B cell (primary cell): ENCODE measurements at regions of chr19 and their contacts with region 1.

Region 1: DNA sequence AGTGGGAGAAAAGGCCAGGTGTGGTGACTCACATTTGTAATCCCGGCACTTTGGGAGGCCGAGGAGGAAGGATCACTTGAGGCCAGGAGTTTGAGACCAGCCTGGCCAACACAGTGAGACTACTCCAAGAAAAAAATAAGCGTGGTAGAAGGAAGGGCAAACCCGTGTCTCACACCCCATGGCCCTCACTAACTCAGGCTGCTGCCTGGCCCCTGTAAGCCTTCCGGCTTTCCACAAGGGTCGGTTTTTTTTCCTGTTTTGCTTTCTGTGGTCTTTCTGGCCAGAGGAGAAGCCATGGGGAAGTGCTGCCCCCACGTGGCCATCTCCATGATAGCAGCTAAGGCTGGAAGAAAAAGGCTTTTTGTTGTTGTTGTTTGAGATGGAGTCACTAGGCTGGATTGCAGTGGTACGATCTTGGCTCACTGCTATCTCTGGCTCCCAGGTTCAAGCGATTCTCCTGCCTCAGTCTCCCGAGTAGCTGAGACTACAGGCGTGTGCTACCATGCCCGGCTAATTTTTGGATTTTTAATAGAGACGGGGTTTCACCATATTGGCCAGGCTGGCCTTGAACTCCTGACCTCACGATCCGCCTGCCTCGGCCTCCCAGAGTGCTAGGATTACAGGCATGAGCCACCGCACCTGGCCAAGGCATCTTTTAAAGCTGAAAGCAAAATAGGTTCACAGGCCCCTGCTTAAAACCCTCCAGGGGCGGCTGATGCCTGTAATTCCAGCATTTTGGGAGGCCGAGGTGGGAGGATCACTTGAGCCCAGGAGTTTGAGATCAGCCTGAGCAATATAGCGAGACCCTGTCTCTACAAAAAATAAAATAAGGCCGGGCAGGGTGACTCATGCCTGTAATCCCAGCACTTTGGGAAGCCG is 7.5 kb upstream of the ARHGEF18 start:
- DNase-seq: peak; percentile 90
- ATAC-seq: no peak
- H3K4me3 ChIP-seq: peak overlapping the region in 1 of 5 experiments; percentile 28
- H3K4me3 Mint-ChIP-seq: peak overlapping the region; percentile 70
- H3K27ac ChIP-seq: peak overlapping the region; percentile 68 to 75
- H3K27ac Mint-ChIP-seq: peak overlapping the region; percentile 95
- H3K4me1 ChIP-seq: peaks cover 93 to 99% of the 10 kb centered on the region in 2 donors
- H3K4me1 Mint-ChIP-seq: peaks cover 80% of the 10 kb centered on the region
- H3K27me3 ChIP-seq: no peaks in the 10 kb centered on the region
- H3K27me3 Mint-ChIP-seq: no peaks in the 10 kb centered on the region
- CTCF ChIP-seq: peak; percentile 90

Region 2: GRCh38 chr19:6767357-6768235 is 573.6 kb before region 1 on chr19 and contains the start of gene SH2D3A:
- CTCF ChIA-PET with region 1: no interaction called
- POLR2A ChIA-PET with region 1: no interaction called
- intact Hi-C with region 1: loop called (anchors 10 kb)
- DNase-seq: peak; percentile 98
- ATAC-seq: peak; percentile 69
- H3K4me3 ChIP-seq: peak within 1 kb of the TSS; percentile 36 to 81 (median 68)
- H3K4me3 Mint-ChIP-seq: peak within 1 kb of the TSS; percentile 93
- H3K27ac ChIP-seq: peak within 1 kb of the TSS; percentile 89 to 96
- H3K27ac Mint-ChIP-seq: peak within 1 kb of the TSS; percentile 95
- H3K4me1 ChIP-seq: peaks cover 28 to 46% of the 10 kb centered on the region in 2 donors
- H3K4me1 Mint-ChIP-seq: peaks cover 47% of the 10 kb centered on the region
- H3K27me3 ChIP-seq: no peaks in the 10 kb centered on the region
- H3K27me3 Mint-ChIP-seq: no peaks in the 10 kb centered on the region
- CTCF ChIP-seq: no peak
- total RNA-seq, gene SH2D3A: 33.5 and 36.1 TPM in 2 replicates

Region 3: GRCh38 chr19:7197760-7198696 is 143.2 kb before region 1 on chr19:
- CTCF ChIA-PET with region 1: interaction called, 4 read pairs
- POLR2A ChIA-PET with region 1: no interaction called
- intact Hi-C with region 1: loop called (anchors 1 kb)
- DNase-seq: peak; percentile 95
- ATAC-seq: peak; percentile 84
- H3K4me3 ChIP-seq: peak overlapping the region; percentile 54 to 77 (median 72)
- H3K4me3 Mint-ChIP-seq: peak overlapping the region; percentile 93
- H3K27ac ChIP-seq: peak overlapping the region; percentile 60 to 72
- H3K27ac Mint-ChIP-seq: peak overlapping the region; percentile 95
- H3K4me1 ChIP-seq: peaks cover 11 to 19% of the 10 kb centered on the region in 2 donors
- H3K4me1 Mint-ChIP-seq: peaks cover 21% of the 10 kb centered on the region
- H3K27me3 ChIP-seq: no peaks in the 10 kb centered on the region
- H3K27me3 Mint-ChIP-seq: peaks cover under 1% of the 10 kb centered on the region
- CTCF ChIP-seq: no peak

Region 4: GRCh38 chr19:7312816-7313215 is 28.4 kb before region 1 on chr19:
- CTCF ChIA-PET with region 1: no interaction called
- POLR2A ChIA-PET with region 1: no interaction called
- intact Hi-C with region 1: no loop called
- DNase-seq: no peak
- ATAC-seq: no peak
- H3K4me3 ChIP-seq: no peak overlapping the region
- H3K4me3 Mint-ChIP-seq: no peak overlapping the region
- H3K27ac ChIP-seq: no peak overlapping the region
- H3K27ac Mint-ChIP-seq: no peak overlapping the region
- H3K4me1 ChIP-seq: no peaks in the 10 kb centered on the region
- H3K4me1 Mint-ChIP-seq: no peaks in the 10 kb centered on the region
- H3K27me3 ChIP-seq: no peaks in the 10 kb centered on the region
- H3K27me3 Mint-ChIP-seq: no peaks in the 10 kb centered on the region
- CTCF ChIP-seq: no peak

Region 5: DNA sequence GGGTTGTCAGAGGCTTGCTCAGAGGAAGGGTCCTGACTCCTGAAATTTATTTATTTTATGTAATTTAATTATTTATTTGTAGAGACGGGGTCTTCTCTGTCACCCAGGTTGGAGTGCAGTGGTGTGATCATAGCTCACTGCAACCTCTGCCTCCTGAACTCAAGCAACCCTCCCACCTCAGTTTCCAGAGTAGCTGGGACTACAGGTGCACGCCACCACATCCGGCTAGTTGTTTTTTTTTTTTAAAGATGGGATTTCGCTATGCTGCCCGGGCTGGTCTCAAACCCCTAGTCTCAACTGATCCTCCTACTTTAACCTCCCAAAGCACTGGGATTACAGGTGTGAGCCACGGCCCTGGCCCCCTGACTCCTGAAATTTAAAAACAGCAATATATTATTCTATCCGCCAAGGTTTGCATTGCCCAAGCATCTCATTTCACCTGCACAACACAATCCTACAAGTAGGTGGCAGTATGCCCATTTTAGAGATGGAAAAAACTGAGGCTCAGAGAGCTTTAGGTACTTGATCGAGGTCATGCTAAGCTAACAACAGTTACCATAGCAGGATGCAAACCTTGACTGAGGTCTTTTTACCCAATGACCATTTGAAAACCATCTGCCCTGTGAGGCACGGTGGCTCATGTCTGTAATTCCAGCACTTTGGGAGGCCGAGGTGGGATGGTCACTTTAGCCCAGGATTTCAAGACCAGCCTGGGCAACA is 25.7 kb after region 1 on chr19:
- CTCF ChIA-PET with region 1: interaction called, 16 read pairs
- POLR2A ChIA-PET with region 1: no interaction called
- intact Hi-C with region 1: no loop called
- DNase-seq: peak; percentile 47
- ATAC-seq: peak; percentile 57
- H3K4me3 ChIP-seq: no peak overlapping the region
- H3K4me3 Mint-ChIP-seq: no peak overlapping the region
- H3K27ac ChIP-seq: no peak overlapping the region
- H3K27ac Mint-ChIP-seq: peak overlapping the region; percentile 76
- H3K4me1 ChIP-seq: peaks cover 0 to 6% of the 10 kb centered on the region in 2 donors
- H3K4me1 Mint-ChIP-seq: peaks cover 31% of the 10 kb centered on the region
- H3K27me3 ChIP-seq: no peaks in the 10 kb centered on the region
- H3K27me3 Mint-ChIP-seq: no peaks in the 10 kb centered on the region
- CTCF ChIP-seq: peak; percentile 54

Region 6: DNA sequence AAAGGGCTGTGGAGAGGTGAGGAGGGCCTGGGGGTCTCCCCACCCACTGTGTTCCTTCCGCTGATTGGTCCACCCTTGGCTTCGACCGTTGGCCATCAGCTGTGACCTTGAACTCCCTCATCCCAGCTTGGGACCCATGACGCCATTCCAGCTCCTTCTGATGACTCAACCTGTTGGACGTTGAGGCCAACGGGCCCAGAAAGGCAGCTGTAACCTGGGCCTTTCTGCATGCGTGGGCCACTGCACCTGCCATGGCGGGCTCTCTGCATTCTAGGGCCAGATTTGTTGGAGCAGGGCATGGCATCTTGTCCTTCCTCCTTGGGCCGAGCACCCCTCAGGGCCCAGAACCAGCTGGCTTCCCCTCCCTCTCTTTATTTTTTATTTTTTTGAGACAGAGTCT is 117.5 kb after region 1 on chr19:
- CTCF ChIA-PET with region 1: no interaction called
- POLR2A ChIA-PET with region 1: interaction called, 18 read pairs
- intact Hi-C with region 1: no loop called
- DNase-seq: no peak
- ATAC-seq: no peak
- H3K4me3 ChIP-seq: no peak overlapping the region
- H3K4me3 Mint-ChIP-seq: no peak overlapping the region
- H3K27ac ChIP-seq: no peak overlapping the region
- H3K27ac Mint-ChIP-seq: no peak overlapping the region
- H3K4me1 ChIP-seq: no peaks in the 10 kb centered on the region
- H3K4me1 Mint-ChIP-seq: peaks cover 2% of the 10 kb centered on the region
- H3K27me3 ChIP-seq: no peaks in the 10 kb centered on the region
- H3K27me3 Mint-ChIP-seq: no peaks in the 10 kb centered on the region
- CTCF ChIP-seq: no peak

Region 7: DNA sequence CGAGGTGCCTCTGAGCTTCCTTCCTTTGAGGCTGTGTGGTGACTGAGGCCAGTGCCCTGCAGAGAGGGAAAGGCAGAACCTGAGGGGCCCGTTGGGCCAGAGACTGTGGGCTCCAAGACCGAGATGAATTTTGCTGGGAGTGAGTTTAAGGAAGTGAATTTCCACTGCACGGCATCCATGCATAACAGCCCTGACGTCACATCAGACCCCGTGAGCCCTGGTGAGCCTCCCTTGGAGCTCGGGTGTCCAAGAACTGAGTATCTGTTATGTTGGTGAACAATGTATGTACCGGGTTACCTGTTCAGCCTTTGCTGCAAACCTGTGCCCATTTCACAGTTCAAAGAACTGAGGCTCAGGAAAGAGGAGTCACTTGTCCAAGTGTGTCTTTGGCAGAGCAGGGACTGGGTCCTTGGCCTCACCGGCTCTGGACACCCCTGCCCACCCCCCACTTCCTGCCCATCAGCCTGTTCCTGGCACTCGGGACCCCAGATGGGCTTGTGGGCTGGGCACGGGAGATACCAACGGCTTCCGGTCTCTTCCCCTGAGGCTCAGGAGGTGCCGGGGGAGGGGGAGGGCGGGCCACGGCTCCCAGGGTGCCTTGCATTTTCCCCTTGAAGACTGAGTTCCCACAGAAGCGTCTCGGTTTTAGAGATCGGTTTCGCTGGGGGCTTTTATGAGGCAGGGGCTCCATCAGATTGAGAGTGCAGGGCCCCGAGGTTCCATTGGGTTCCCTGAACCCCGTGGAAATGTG is 1322.9 kb after region 1 on chr19:
- CTCF ChIA-PET with region 1: no interaction called
- POLR2A ChIA-PET with region 1: interaction called, 10 read pairs
- intact Hi-C with region 1: no loop called
- DNase-seq: peak; percentile 74
- ATAC-seq: peak; percentile 56
- H3K4me3 ChIP-seq: peak overlapping the region in 3 of 5 experiments; percentile 31 to 56 (median 36)
- H3K4me3 Mint-ChIP-seq: peak overlapping the region; percentile 68
- H3K27ac ChIP-seq: peak overlapping the region in 1 of 2 donors; percentile 60
- H3K27ac Mint-ChIP-seq: peak overlapping the region; percentile 63
- H3K4me1 ChIP-seq: peaks cover 15 to 16% of the 10 kb centered on the region in 2 donors
- H3K4me1 Mint-ChIP-seq: peaks cover 18% of the 10 kb centered on the region
- H3K27me3 ChIP-seq: no peaks in the 10 kb centered on the region
- H3K27me3 Mint-ChIP-seq: peaks cover 3% of the 10 kb centered on the region
- CTCF ChIP-seq: no peak